Calu3 (cell line): ENCODE measurements at regions of chr4 and their contacts with region 1.

Region 1: GRCh38 chr4:15956179-15956850 is 6.7 kb downstream of the FGFBP2 start:
- DNase-seq: peak; percentile 85
- H3K4me3 Mint-ChIP-seq: no peak overlapping the region
- H3K27ac Mint-ChIP-seq: no peak overlapping the region
- H3K4me1 Mint-ChIP-seq: peaks cover 18% of the 10 kb centered on the region
- H3K27me3 Mint-ChIP-seq: no peaks in the 10 kb centered on the region
- CTCF ChIP-seq: peak; percentile 56

Region 2: GRCh38 chr4:15400981-15401671 is 555.2 kb before region 1 on chr4:
- CTCF ChIA-PET with region 1: no interaction called
- intact Hi-C with region 1: no loop called
- DNase-seq: peak; percentile 48
- H3K4me3 Mint-ChIP-seq: no peak overlapping the region
- H3K27ac Mint-ChIP-seq: peak overlapping the region; percentile 77
- H3K4me1 Mint-ChIP-seq: peaks cover 16% of the 10 kb centered on the region
- H3K27me3 Mint-ChIP-seq: peaks cover 10% of the 10 kb centered on the region
- CTCF ChIP-seq: no peak

Region 3: DNA sequence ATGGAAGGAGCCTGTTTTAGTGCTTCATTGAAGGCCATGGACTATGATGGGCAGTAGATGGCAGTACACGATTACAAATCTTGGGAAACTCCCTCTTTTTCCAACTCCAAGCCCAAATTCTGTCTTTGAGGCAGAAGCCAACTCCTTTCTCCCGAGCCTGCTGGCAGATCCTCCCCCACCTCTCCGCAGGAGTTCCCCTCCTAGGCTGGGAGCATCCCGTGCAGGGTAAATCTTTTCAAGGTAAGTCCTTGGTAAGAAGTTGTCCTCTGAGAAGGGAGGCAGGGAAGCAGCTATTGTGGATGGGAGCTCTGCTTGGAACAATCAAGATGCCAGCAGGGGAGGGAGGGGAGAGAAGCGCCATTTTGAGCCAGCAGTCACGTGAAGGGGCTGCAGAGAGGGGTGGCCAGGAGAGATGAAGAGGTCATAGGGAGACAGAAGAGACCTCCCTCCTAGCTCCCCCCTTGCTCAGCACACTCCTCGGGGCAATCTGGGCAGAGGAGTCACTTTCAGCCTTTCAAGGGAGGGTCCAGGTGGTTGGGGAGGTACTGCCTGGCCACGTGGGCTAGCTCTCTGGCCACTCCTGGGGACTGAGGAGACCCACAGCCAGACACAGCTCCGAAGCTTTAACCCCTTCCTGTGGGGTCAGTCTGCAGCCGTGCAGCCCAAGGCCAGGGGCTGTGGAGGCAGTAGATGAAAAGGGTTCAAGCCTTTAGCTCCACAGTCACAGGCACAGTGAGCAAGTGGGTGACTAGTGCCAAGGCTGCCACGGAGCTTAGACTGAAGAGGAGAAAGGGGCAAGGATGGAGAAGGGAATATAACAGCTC is 477.0 kb before region 1 on chr4:
- CTCF ChIA-PET with region 1: interaction called, 15 read pairs
- intact Hi-C with region 1: loop called (anchors 1 kb)
- DNase-seq: peak; percentile 50
- H3K4me3 Mint-ChIP-seq: peak overlapping the region; percentile 94
- H3K27ac Mint-ChIP-seq: peak overlapping the region; percentile 98
- H3K4me1 Mint-ChIP-seq: no peaks in the 10 kb centered on the region
- H3K27me3 Mint-ChIP-seq: no peaks in the 10 kb centered on the region
- CTCF ChIP-seq: peak; percentile 47

Region 4: GRCh38 chr4:15714646-15715435 is 241.5 kb before region 1 on chr4:
- CTCF ChIA-PET with region 1: no interaction called
- intact Hi-C with region 1: no loop called
- DNase-seq: no peak
- H3K4me3 Mint-ChIP-seq: no peak overlapping the region
- H3K27ac Mint-ChIP-seq: no peak overlapping the region
- H3K4me1 Mint-ChIP-seq: no peaks in the 10 kb centered on the region
- H3K27me3 Mint-ChIP-seq: no peaks in the 10 kb centered on the region
- CTCF ChIP-seq: no peak

Region 5: GRCh38 chr4:15729910-15730533 is 226.3 kb before region 1 on chr4:
- CTCF ChIA-PET with region 1: no interaction called
- intact Hi-C with region 1: loop called (anchors 1 kb)
- DNase-seq: no peak
- H3K4me3 Mint-ChIP-seq: no peak overlapping the region
- H3K27ac Mint-ChIP-seq: no peak overlapping the region
- H3K4me1 Mint-ChIP-seq: no peaks in the 10 kb centered on the region
- H3K27me3 Mint-ChIP-seq: no peaks in the 10 kb centered on the region
- CTCF ChIP-seq: peak; percentile 50

Region 6: GRCh38 chr4:15855804-15856475 is 100.4 kb before region 1 on chr4:
- CTCF ChIA-PET with region 1: no interaction called
- intact Hi-C with region 1: no loop called
- DNase-seq: no peak
- H3K4me3 Mint-ChIP-seq: no peak overlapping the region
- H3K27ac Mint-ChIP-seq: no peak overlapping the region
- H3K4me1 Mint-ChIP-seq: no peaks in the 10 kb centered on the region
- H3K27me3 Mint-ChIP-seq: no peaks in the 10 kb centered on the region
- CTCF ChIP-seq: no peak

Region 7: DNA sequence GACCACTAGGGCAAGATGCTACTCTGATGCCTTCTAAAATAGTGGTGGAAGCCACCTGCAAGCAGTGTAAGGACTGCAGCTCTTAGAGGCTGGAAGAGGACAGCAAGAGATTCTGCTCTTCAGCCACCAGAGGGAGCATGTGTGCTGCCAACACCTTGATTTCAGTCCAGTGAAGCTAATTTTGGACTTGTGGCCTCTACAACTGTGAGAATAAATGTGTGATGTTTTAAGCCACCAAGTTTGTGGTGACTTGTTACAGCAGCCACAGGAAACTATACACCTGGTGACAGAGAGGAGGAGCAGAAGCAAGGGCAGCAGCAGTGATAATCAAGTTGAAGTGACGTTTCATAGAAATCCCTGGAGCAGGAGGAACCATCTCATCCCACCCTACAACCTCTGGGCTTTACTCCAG is 73.6 kb before region 1 on chr4:
- CTCF ChIA-PET with region 1: interaction called, 79 read pairs
- intact Hi-C with region 1: loop called (anchors 1 kb)
- DNase-seq: peak; percentile 54
- H3K4me3 Mint-ChIP-seq: no peak overlapping the region
- H3K27ac Mint-ChIP-seq: peak overlapping the region; percentile 77
- H3K4me1 Mint-ChIP-seq: peaks cover 27% of the 10 kb centered on the region
- H3K27me3 Mint-ChIP-seq: no peaks in the 10 kb centered on the region
- CTCF ChIP-seq: peak; percentile 71

Region 8: DNA sequence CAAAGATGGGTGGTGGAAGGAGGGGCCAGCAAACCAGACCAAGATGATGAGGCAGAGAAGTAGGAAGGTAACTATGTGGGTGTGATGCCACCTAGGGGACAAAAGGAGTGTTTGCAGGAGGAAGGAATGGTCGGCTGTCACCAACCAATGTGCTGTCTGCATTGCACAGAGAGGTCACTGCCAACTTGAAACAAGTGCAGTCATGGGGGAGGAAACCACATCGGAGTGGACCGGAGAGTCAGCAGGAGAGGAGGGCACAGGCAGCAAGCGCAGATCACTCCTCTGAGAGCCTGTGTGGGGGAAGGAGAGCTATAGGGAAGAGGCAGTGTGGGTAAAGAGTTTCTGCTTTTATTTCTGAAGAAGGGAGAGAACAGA is 45.2 kb after region 1 on chr4:
- CTCF ChIA-PET with region 1: no interaction called
- intact Hi-C with region 1: loop called (anchors 2 kb)
- DNase-seq: peak; percentile 33
- H3K4me3 Mint-ChIP-seq: no peak overlapping the region
- H3K27ac Mint-ChIP-seq: no peak overlapping the region
- H3K4me1 Mint-ChIP-seq: no peaks in the 10 kb centered on the region
- H3K27me3 Mint-ChIP-seq: no peaks in the 10 kb centered on the region
- CTCF ChIP-seq: peak; percentile 39